Activated T-helper 2 cell treated with anti-CD3 and anti-CD28 coated beads, Interferon-gamma antibody, Interleukin-2, Interleukin-4, amounts not matched to agents 10 μg/mL and 5 μg/mL and 100 μg/mL, durations not matched to agents 14 hours and 24 hours and 36 hours (primary cell): ENCODE measurements at regions of chr10 and their contacts with region 1.

Region 1: GRCh38 chr10:89029785-89030437 is 39.3 kb downstream of the FAS start:
- DNase-seq: peak; percentile 48
- H3K4me3 Mint-ChIP-seq: no peak overlapping the region
- H3K27ac Mint-ChIP-seq: no peak overlapping the region
- H3K4me1 Mint-ChIP-seq: peaks cover 38% of the 10 kb centered on the region
- H3K27me3 Mint-ChIP-seq: no peaks in the 10 kb centered on the region

Region 2: GRCh38 chr10:88990384-88991160 is 39.3 kb before region 1 on chr10 and contains the start of gene FAS:
- intact Hi-C with region 1: loop called (anchors 5 kb)
- DNase-seq: peak; percentile 70
- H3K4me3 Mint-ChIP-seq: peak within 1 kb of the TSS; percentile 98
- H3K27ac Mint-ChIP-seq: peak within 1 kb of the TSS; percentile 98
- H3K4me1 Mint-ChIP-seq: peaks cover 59% of the 10 kb centered on the region
- H3K27me3 Mint-ChIP-seq: no peaks in the 10 kb centered on the region
- total RNA-seq, gene FAS: 20.7 and 22.5 TPM in 2 replicates

Region 3: DNA sequence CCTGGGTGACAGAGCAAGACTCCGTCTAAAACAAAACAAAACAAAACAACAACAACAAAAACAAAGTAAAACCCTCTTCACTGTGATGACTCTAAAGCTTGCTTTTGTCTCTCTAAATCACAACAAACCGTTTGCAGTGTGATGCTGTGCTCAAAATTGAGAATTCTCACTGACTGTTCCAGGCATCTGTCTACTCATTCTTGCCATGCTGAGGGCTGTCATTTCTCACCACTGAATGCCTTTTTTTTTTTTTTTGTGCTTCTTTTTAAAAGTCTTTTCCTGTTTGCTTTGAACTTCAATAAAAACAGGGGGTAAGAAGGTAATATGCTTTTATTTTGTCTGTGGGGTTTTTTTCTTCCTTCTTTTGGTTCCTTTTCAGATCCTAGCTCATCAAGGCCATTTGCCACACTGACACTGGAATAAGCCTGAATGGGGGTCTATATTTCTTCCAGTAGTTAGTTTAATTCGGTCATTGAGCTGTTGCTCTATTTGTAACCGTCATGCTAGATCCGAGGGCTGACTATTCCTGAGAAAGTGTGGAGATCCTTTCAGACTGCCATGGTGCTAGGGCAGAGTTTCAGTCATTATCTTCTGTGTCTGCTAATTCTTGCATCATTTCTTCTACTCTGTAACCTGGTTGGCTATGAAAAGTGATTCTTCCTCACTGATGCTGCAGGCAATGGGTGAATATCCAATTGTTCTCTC is 28.7 kb before region 1 on chr10:
- intact Hi-C with region 1: loop called (anchors 1 kb)
- DNase-seq: no peak
- H3K4me3 Mint-ChIP-seq: peak overlapping the region; percentile 58
- H3K27ac Mint-ChIP-seq: peak overlapping the region; percentile 66
- H3K4me1 Mint-ChIP-seq: peaks cover 65% of the 10 kb centered on the region
- H3K27me3 Mint-ChIP-seq: no peaks in the 10 kb centered on the region

Region 4: GRCh38 chr10:89079961-89080360 is 50.0 kb after region 1 on chr10:
- intact Hi-C with region 1: loop called (anchors 1 kb)
- DNase-seq: no peak
- H3K4me3 Mint-ChIP-seq: no peak overlapping the region
- H3K27ac Mint-ChIP-seq: no peak overlapping the region
- H3K4me1 Mint-ChIP-seq: peaks cover 40% of the 10 kb centered on the region
- H3K27me3 Mint-ChIP-seq: no peaks in the 10 kb centered on the region

Region 5: DNA sequence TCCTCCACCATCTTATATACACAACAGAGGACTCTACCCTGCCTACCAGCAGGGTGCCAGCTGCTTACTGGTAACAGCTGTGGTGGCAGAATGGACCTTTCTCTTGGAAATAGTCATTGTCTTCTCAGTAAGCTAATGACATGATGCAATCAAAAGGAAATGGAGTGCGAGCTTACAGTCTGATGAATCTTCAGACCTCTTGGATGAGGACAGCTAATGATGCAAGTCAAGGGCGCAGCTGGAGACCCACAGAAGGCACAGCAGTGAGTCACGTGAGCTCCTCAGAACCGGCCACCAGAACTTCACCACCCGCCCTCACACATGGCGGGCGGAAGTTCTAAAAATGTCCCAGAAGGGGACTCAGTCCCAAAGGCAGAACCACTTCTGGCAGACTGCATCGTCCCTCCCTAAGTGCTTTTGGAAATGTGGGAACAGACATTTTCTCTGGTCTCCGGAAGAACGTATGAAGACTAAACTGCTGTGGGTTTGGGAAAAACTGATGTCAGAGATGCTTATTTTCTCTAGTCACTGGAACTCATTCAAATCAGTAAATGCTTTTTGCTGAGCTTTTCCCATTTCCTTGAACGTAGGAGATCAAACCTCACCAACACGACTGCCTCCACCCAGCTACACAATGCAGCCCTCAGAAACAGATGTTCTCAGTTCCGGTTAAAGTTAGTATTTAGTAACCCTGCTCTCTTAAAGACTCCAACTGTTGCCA is 57.0 kb after region 1 on chr10:
- intact Hi-C with region 1: loop called (anchors 1 kb)
- DNase-seq: no peak
- H3K4me3 Mint-ChIP-seq: no peak overlapping the region
- H3K27ac Mint-ChIP-seq: no peak overlapping the region
- H3K4me1 Mint-ChIP-seq: peaks cover 13% of the 10 kb centered on the region
- H3K27me3 Mint-ChIP-seq: no peaks in the 10 kb centered on the region

Region 6: DNA sequence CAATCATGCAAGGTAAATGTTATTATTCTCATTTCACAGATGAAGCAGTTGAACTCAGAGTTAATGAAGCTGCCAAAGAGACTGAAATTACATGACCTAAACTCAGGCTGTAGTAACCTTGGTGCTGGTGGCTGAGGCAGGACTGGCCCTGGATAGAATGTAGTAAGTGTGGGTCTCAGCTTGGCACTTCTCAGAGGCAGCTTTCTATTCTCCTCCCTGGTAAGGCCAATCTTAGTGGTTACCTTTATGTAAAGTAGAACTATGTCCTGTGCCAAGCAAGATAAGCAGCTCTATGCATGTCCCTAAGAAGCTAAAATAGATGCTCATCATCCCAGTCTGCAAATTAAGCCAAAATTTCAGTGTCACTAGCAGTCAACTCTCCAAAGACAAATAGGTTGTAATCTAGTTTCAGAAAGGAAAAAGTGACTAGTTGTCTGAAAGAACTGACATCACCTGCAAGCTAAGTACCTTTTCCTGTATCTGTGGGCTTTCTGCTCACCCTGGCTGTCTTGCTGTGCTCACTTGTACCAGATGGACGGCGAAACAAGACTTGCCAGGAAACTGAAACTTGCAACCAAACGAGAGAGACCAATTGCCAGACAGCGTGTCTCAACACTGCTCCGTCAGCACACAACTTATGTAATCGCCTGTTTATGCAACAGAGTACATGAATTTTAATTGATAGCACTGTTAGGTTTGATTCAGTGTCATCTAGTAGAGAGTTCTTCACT is 133.5 kb after region 1 on chr10:
- intact Hi-C with region 1: loop called (anchors 5 kb)
- DNase-seq: peak; percentile 59
- H3K4me3 Mint-ChIP-seq: peak overlapping the region; percentile 55
- H3K27ac Mint-ChIP-seq: peak overlapping the region; percentile 44
- H3K4me1 Mint-ChIP-seq: peaks cover 35% of the 10 kb centered on the region
- H3K27me3 Mint-ChIP-seq: peaks cover 32% of the 10 kb centered on the region

Region 7: DNA sequence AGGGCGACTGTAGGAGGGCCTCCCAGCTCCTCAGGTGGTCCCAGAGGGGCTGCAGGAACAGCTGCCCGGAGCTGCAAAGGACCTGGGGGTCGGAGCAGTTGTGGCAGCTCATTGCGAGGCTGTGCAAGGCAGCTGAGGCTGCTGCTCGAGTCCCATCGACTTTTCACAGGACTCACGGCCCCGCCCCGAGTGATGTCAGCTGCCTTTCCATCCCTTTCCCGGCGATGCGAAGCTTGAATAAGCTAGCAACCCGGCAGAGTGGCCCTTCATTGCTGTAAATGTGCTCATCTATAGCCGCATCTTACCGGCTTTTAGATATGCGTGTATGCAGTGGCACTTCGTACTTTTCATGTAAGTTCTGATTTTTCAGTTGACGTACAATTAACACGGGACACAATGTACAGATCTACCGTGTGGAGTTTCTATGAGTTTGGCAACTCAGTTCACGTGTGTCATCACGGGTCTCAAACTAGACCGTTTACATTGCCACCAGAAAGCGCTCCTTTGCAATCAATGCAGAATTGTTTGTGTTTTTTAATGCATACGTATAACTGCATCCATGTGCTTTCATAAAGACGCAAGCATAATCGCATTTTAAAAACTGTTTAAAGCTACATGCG is 177.4 kb after region 1 on chr10 and contains the start of gene CH25H:
- intact Hi-C with region 1: no loop called
- DNase-seq: peak; percentile 26
- H3K4me3 Mint-ChIP-seq: peak within 1 kb of the TSS; percentile 75
- H3K27ac Mint-ChIP-seq: no peak within 1 kb of the TSS
- H3K4me1 Mint-ChIP-seq: peaks cover 16% of the 10 kb centered on the region
- H3K27me3 Mint-ChIP-seq: peaks cover 48% of the 10 kb centered on the region
- total RNA-seq, gene CH25H: not detected in 2 replicates

Region 8: GRCh38 chr10:89217057-89217990 is 187.4 kb after region 1 on chr10:
- intact Hi-C with region 1: loop called (anchors 1 kb)
- DNase-seq: peak; percentile 27
- H3K4me3 Mint-ChIP-seq: no peak overlapping the region
- H3K27ac Mint-ChIP-seq: no peak overlapping the region
- H3K4me1 Mint-ChIP-seq: peaks cover 6% of the 10 kb centered on the region
- H3K27me3 Mint-ChIP-seq: peaks cover 1% of the 10 kb centered on the region